H1 (cell line): ENCODE measurements at regions of chr10 and their contacts with region 1.

Region 1: GRCh38 chr10:101569838-101570766 is 18.0 kb downstream of the POLL start:
- DNase-seq: peak in 1 of 2 experiments; percentile 95
- H3K4me3 ChIP-seq: peak overlapping the region; percentile 34 to 72 (median 66)
- H3K27ac ChIP-seq: no peak overlapping the region
- H3K4me1 ChIP-seq: peaks cover 0 to 20% (median 10%) of the 10 kb centered on the region in 4 experiments; a peak in 5 of 7 replicates
- H3K27me3 ChIP-seq: peaks cover 7 to 73% (median 57%) of the 10 kb centered on the region in 4 experiments
- CTCF ChIP-seq: peak; percentile 61 to 79 (median 79)
- EP300 ChIP-seq: no peak
- POLR2A ChIP-seq: no peak
- RAD21 ChIP-seq: peak; percentile 75 to 85

Region 2: GRCh38 chr10:101291331-101292193 is 278.5 kb before region 1 on chr10:
- CTCF ChIA-PET with region 1: interaction called, 27 read pairs
- POLR2A ChIA-PET with region 1: interaction called, 3 read pairs
- DNase-seq: peak in 1 of 2 experiments; percentile 86
- H3K4me3 ChIP-seq: peak overlapping the region; percentile 40 to 68 (median 48)
- H3K27ac ChIP-seq: no peak overlapping the region
- H3K4me1 ChIP-seq: peaks cover 15 to 24% (median 17%) of the 10 kb centered on the region in 4 experiments; a peak in 6 of 7 replicates
- H3K27me3 ChIP-seq: peaks cover 47 to 92% (median 82%) of the 10 kb centered on the region in 4 experiments
- CTCF ChIP-seq: peak; percentile 68 to 90 (median 74)
- EP300 ChIP-seq: no peak
- POLR2A ChIP-seq: no peak
- RAD21 ChIP-seq: peak; percentile 67 to 75

Region 3: DNA sequence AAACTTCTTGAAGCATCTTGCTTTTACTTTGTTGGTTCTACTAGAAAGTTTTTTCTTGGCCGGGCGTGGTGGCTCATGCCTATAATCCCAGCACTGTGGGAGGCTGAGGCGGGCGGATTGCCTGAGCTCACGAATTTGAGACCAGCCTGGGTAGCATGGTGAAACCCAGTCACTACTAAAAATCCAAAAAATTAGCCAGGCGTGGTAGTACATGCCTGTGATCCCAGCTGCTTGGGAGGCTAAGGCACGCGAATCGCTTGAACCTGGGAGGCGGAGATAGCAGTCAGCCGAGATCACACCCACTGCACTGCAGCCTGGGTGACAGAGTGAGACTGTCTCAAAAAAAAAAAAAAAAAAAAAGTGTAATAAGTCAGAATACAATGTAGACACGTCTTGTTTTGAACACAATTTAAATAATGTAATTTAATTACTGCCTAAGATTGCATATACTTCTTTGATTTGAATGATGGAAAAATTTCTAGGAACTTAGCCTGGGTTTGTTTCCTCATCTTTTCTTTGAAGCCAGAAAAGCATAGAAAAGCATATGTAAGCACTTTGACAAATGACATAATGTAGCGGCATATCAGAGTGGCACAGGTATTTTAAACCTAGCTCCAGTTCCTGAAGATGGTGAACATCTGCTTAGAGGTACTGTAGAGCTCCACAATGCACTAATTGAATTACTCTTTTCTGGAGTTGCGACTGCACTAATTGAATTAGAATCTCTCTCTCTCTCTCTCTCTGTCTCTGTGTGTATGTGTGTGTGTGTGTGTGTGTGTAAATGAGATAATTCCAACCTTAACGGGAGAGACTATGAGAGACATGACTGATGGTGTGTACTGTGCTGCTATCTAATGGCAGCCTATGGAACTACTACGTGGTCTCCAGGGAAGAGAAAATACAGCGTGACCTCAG is 128.3 kb before region 1 on chr10:
- CTCF ChIA-PET with region 1: interaction called, 36 read pairs
- POLR2A ChIA-PET with region 1: no interaction called
- DNase-seq: no peak
- H3K4me3 ChIP-seq: no peak overlapping the region
- H3K27ac ChIP-seq: no peak overlapping the region
- H3K4me1 ChIP-seq: peaks cover 0 to under 1% (median 0%) of the 10 kb centered on the region in 4 experiments; a peak in 1 of 7 replicates
- H3K27me3 ChIP-seq: no peaks in the 10 kb centered on the region
- CTCF ChIP-seq: peak in 2 of 3 experiments; percentile 80 to 83; a peak in 3 of 4 replicates
- EP300 ChIP-seq: no peak
- POLR2A ChIP-seq: no peak
- RAD21 ChIP-seq: peak; percentile 93 to 95

Region 4: DNA sequence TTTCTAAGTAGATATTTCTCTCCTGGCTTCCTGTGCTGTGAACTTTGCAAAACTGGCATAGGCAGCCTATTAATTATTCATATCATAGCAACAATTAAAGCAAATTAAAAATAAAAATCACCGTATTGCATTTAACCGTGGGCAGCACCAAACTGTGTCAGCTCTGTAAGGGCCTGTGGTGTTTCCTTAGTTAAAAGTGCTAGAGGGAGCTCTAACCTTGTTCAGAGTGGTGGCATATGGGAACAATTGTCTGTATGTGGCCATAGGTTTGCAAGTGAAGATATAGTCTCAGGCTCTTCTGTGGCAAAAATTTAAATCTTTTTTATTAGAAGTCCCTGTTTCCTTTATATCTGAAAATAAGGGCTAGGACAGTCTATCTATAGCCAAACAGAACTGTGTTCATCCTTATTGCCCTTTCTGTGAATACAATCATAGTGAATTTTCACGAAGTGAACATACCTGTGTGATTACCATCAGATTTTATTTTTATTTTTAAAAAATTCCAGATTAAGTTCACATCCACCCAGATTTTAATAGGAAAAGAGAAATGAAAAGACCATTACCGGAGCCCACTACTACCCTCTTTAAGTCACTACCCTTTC is 74.7 kb before region 1 on chr10:
- CTCF ChIA-PET with region 1: interaction called, 11 read pairs
- POLR2A ChIA-PET with region 1: interaction called, 3 read pairs
- DNase-seq: no peak
- H3K4me3 ChIP-seq: no peak overlapping the region
- H3K27ac ChIP-seq: no peak overlapping the region
- H3K4me1 ChIP-seq: peaks cover 0 to 4% (median 0%) of the 10 kb centered on the region in 4 experiments; a peak in 2 of 7 replicates
- H3K27me3 ChIP-seq: no peaks in the 10 kb centered on the region
- CTCF ChIP-seq: peak in 2 of 3 experiments; percentile 53 to 64; a peak in 3 of 4 replicates
- EP300 ChIP-seq: no peak
- POLR2A ChIP-seq: no peak
- RAD21 ChIP-seq: peak; percentile 65 to 71

Region 5: DNA sequence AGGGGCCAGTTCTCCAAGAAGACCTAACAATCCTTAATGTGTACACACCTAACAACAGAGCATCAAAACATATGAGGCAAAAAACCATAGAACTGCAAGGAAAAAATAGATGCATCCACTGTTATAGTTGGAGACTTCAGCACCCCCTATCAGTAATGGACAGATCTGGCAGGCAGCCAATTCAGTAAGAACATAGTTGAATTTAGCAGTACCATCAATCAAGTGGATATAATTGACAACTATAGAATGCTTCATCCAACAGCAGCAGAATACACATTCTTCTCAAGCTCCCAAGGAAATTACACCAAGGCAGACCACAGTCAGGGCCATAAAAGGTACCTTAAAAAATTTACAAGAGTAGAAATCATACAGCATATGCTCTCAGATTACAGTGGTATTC is 24.2 kb before region 1 on chr10:
- CTCF ChIA-PET with region 1: interaction called, 22 read pairs
- POLR2A ChIA-PET with region 1: no interaction called
- DNase-seq: no peak
- H3K4me3 ChIP-seq: no peak overlapping the region
- H3K27ac ChIP-seq: no peak overlapping the region
- H3K4me1 ChIP-seq: no peaks in the 10 kb centered on the region
- H3K27me3 ChIP-seq: no peaks in the 10 kb centered on the region
- CTCF ChIP-seq: no peak
- EP300 ChIP-seq: no peak
- POLR2A ChIP-seq: no peak
- RAD21 ChIP-seq: no peak; a peak in 1 of 4 replicates

Region 6: GRCh38 chr10:101587725-101588653 is 17.9 kb after region 1 on chr10 and contains the starts of genes DPCD and POLL:
- CTCF ChIA-PET with region 1: interaction called, 56 read pairs
- POLR2A ChIA-PET with region 1: interaction called, 42 read pairs
- DNase-seq: peak; percentile 75 to 95
- H3K4me3 ChIP-seq: peak within 1 kb of the TSS; percentile 83 to 96 (median 88)
- H3K27ac ChIP-seq: no peak within 1 kb of the TSS
- H3K4me1 ChIP-seq: peaks cover 0 to 5% (median 4%) of the 10 kb centered on the region in 4 experiments; a peak in 6 of 7 replicates
- H3K27me3 ChIP-seq: no peaks in the 10 kb centered on the region
- CTCF ChIP-seq: no peak
- EP300 ChIP-seq: no peak
- POLR2A ChIP-seq: peak in 1 of 2 experiments; percentile 47; a peak in 1 of 3 replicates
- RAD21 ChIP-seq: no peak
- total RNA-seq, gene DPCD: 18.8 and 21.2 TPM in 2 replicates
- total RNA-seq, gene POLL: 26.1 and 26.8 TPM in 2 replicates

Region 7: GRCh38 chr10:101671453-101671852 is 101.4 kb after region 1 on chr10:
- CTCF ChIA-PET with region 1: no interaction called
- POLR2A ChIA-PET with region 1: no interaction called
- DNase-seq: no peak
- H3K4me3 ChIP-seq: no peak overlapping the region
- H3K27ac ChIP-seq: no peak overlapping the region
- H3K4me1 ChIP-seq: no peaks in the 10 kb centered on the region
- H3K27me3 ChIP-seq: no peaks in the 10 kb centered on the region
- CTCF ChIP-seq: no peak
- EP300 ChIP-seq: no peak
- POLR2A ChIP-seq: no peak
- RAD21 ChIP-seq: no peak

Region 8: DNA sequence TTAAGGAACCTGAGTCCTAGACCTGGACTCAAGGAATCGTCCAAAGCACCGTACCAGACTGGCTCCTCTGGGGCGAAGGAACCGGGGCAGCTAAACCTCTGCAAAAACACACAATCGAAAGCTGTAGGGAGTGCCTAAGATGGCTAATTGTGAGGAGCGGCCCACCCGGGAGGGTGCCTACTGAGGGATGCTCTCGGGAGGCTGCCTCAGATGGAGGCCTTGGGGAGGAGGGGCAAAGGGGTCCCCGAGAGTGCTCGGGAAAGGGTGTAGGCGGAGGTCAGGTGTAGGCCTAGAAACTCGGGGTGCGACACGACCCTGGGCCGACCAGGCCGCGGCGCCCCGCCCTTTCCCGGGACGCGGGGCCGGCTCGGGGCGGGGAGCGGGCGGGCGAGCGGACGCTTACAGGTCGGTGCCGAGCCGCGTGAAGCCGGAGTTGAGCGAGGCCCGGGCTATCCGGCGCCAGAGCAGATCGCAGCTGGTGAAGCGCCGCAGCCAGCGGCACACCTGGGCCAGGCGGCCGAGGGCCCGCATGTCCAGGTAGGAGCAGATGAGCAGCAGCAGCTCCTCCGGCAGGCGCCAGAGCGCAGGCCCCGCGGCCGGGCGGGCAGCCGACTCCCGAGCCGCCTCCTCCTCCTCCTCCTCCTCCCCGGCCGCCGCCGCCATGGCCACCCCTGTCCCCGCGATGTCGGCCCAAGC is 124.0 kb after region 1 on chr10:
- CTCF ChIA-PET with region 1: no interaction called
- POLR2A ChIA-PET with region 1: no interaction called
- DNase-seq: no peak
- H3K4me3 ChIP-seq: peak overlapping the region; percentile 74 to 93 (median 81)
- H3K27ac ChIP-seq: peak overlapping the region; percentile 95
- H3K4me1 ChIP-seq: peaks cover 3 to 12% (median 3%) of the 10 kb centered on the region in 4 experiments; a peak in 5 of 7 replicates
- H3K27me3 ChIP-seq: no peaks in the 10 kb centered on the region
- CTCF ChIP-seq: no peak
- EP300 ChIP-seq: no peak
- POLR2A ChIP-seq: peak; percentile 74 to 86
- RAD21 ChIP-seq: no peak